Lower leg skin (tissue), 4 donors: ENCODE measurements at regions of chr1 and their contacts with region 1.

Region 1: DNA sequence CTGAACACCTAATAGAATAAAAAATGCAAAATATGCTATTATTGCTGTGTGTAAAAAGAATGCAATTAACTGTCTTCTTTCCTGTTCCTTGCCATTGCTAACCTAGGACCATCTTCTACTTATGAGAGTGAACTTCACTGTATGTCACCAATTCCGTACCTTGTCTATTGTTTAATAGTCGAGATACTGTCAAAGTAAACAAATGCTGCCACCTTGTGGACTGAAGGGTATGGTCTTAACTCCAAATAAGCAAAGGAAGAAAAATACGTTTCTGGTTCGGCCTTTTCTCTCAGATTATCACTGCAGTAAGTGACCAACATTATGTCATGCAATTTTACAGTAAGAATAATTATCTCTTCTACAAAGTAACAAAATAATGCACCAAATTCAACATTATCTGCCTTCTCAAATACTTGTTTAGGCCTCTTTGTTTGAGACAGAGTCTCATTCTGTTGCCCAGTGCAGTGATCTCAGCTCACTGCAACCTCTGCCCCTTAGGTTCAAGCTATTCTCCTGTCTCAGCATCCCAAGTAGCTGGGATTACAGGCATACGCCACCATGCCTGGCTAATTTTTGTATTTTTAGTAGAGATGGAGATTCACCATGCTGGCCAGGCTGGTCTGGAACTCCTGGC is 133.4 kb downstream of the COP1 start:
- DNase-seq: peak in 1 of 2 donors; percentile 51
- H3K4me3 ChIP-seq: no peak overlapping the region
- CTCF ChIP-seq: no peak
- POLR2A ChIP-seq: no peak

Region 2: DNA sequence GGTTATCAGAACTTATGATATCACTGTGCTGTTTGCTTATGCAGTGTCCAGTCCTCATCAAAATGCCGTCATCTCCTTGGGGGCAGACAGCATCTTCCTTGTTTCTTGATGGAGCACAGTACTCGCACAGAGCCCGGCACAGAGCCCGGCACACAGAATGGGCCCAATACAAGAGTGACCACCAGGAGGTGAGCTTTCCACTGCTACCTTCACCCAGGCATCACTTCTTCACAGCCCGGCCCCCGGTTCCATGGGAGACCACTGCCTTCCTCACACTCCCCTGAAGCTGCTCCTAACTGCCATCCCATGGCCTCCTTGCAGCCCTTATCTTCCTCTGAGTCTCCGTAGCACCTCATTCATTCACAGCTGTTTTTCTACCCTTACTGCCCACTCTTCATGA is 424.2 kb before region 1 on chr1:
- intact Hi-C with region 1: loop called (anchors 5 kb)
- DNase-seq: no peak
- H3K4me3 ChIP-seq: no peak overlapping the region
- CTCF ChIP-seq: no peak
- POLR2A ChIP-seq: no peak